ENCODE measurements at regions of chr5 and their contacts with region 1.

Region 1: GRCh38 chr5:96997265-96997859 is 61.5 kb downstream of the LNPEP start:
- DNase-seq: no peak
- ATAC-seq: peak; percentile 73
- H3K4me3 Mint-ChIP-seq: no peak overlapping the region
- H3K27ac Mint-ChIP-seq: no peak overlapping the region
- H3K4me1 Mint-ChIP-seq: peaks cover 34% of the 10 kb centered on the region
- H3K27me3 Mint-ChIP-seq: no peaks in the 10 kb centered on the region

Region 2: DNA sequence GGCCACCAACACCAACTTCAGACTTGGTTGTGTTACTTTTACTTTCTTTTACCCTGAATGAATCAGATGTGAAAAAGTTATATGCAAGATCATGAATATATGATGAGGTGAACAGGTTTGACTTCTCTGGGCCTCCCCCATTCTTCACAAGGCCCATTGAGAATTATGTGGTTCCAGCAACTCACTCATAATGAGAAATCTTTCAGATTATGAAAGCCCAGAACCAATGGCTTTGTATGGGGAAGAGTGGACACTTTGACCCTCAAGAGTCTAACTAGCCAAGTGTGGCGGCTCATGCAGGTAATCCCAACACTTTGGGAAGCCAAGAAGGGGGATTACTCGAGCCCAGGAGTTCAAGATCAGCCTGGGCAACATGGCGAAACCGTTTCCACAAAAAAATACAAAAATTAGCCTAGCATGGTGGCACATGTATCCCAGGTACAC is 77.6 kb before region 1 on chr5:
- CTCF ChIA-PET with region 1: no interaction called
- DNase-seq: no peak
- ATAC-seq: peak; percentile 20
- H3K4me3 Mint-ChIP-seq: no peak overlapping the region
- H3K27ac Mint-ChIP-seq: no peak overlapping the region
- H3K4me1 Mint-ChIP-seq: peaks cover 27% of the 10 kb centered on the region
- H3K27me3 Mint-ChIP-seq: no peaks in the 10 kb centered on the region

Region 3: DNA sequence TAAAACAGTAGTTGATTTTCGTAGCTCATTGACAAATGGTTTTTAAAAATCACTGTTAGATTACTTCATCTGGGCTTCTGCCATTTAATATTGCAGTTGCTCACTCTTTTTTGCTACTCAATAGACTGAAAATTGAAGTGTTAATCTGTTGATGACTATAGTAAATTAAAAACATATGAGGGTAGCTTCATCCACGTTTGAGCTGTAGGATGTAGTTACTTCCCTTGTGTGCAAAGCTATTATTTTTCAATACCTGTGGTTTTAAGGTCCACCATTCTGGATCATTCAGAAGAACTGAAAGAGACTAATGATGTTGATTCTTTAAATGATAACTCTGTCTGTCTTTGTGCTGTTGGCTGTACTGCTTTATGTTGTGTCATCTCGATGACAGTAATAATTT is 13.2 kb after region 1 on chr5:
- CTCF ChIA-PET with region 1: interaction called, 10 read pairs
- DNase-seq: no peak
- ATAC-seq: no peak
- H3K4me3 Mint-ChIP-seq: no peak overlapping the region
- H3K27ac Mint-ChIP-seq: no peak overlapping the region
- H3K4me1 Mint-ChIP-seq: peaks cover 17% of the 10 kb centered on the region
- H3K27me3 Mint-ChIP-seq: no peaks in the 10 kb centered on the region

Region 4: GRCh38 chr5:97142521-97143254 is 145.3 kb after region 1 on chr5 and contains the start of gene LIX1:
- CTCF ChIA-PET with region 1: interaction called, 16 read pairs
- DNase-seq: peak; percentile 62
- ATAC-seq: peak; percentile 87
- H3K4me3 Mint-ChIP-seq: no peak within 1 kb of the TSS
- H3K27ac Mint-ChIP-seq: no peak within 1 kb of the TSS
- H3K4me1 Mint-ChIP-seq: no peaks in the 10 kb centered on the region
- H3K27me3 Mint-ChIP-seq: peaks cover 24% of the 10 kb centered on the region
- total RNA-seq, gene LIX1: not detected